Right ventricle myocardium superior (tissue), 1 donor: ENCODE measurements at regions of chr15 and their contacts with region 1.

Region 1: GRCh38 chr15:91942676-91943576 is 89.4 kb downstream of the SLCO3A1 start:
- DNase-seq: peak; percentile 83
- ATAC-seq: peak; percentile 86

Region 2: GRCh38 chr15:91867581-91868026 is 75.3 kb before region 1 on chr15:
- intact Hi-C with region 1: loop called (anchors 5 kb)
- DNase-seq: peak; percentile 78
- ATAC-seq: peak; percentile 64

Region 3: GRCh38 chr15:92069308-92070250 is 126.7 kb after region 1 on chr15:
- intact Hi-C with region 1: loop called (anchors 10 kb)
- DNase-seq: no peak
- ATAC-seq: peak; percentile 64